ENCODE measurements at regions of chr2 and their contacts with region 1.

Region 1: DNA sequence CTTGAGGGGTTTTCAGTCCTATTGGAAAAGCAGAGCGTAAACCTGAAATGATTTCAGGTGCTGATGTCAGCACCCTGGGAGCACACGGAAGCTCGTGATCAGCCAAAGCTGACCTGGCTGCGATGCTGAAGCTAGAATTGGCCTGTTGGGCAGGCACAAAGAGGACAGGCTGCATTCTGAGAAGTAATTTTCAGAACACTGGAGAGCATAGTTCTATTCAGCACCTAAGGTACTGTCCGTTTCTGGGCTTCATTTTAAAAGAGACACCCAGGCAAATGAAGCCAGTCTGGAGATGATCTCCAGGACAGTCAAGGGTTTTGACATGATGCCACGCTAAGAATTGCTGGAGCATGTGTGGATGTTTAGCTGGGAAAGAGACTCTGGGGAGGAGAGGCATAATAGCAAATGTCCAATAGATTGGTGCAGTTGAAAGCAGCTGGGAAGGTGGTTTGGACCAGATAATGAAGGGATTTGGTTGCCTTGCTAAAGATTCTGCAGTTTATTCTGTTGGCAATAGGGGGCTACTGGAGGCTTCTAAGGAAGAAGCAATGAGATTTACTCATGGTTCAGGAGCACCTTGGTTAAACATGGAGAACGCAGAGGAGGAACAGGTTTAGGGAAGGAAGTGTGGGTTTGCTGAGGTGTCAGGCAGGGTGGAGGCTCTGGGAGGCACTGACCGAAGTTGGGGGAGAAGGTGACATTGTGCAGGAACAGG is 86.6 kb downstream of the ACOXL start:
- DNase-seq: no peak
- H3K4me3 ChIP-seq: no peak overlapping the region
- H3K27ac ChIP-seq: no peak overlapping the region
- H3K4me1 ChIP-seq: no peaks in the 10 kb centered on the region
- H3K27me3 ChIP-seq: no peaks in the 10 kb centered on the region
- CTCF ChIP-seq: no peak
- EP300 ChIP-seq: no peak
- POLR2A ChIP-seq: no peak

Region 2: GRCh38 chr2:110853507-110853906 is 34.6 kb after region 1 on chr2:
- intact Hi-C with region 1: no loop called
- DNase-seq: peak; percentile 45 to 52
- H3K4me3 ChIP-seq: no peak overlapping the region
- H3K27ac ChIP-seq: no peak overlapping the region
- H3K4me1 ChIP-seq: peaks cover 0 to 4% (median 0%) of the 10 kb centered on the region in 4 donors
- H3K27me3 ChIP-seq: no peaks in the 10 kb centered on the region
- CTCF ChIP-seq: peak in 3 of 7 experiments; percentile 16 to 33 (median 27)
- EP300 ChIP-seq: no peak
- POLR2A ChIP-seq: no peak

Region 3: DNA sequence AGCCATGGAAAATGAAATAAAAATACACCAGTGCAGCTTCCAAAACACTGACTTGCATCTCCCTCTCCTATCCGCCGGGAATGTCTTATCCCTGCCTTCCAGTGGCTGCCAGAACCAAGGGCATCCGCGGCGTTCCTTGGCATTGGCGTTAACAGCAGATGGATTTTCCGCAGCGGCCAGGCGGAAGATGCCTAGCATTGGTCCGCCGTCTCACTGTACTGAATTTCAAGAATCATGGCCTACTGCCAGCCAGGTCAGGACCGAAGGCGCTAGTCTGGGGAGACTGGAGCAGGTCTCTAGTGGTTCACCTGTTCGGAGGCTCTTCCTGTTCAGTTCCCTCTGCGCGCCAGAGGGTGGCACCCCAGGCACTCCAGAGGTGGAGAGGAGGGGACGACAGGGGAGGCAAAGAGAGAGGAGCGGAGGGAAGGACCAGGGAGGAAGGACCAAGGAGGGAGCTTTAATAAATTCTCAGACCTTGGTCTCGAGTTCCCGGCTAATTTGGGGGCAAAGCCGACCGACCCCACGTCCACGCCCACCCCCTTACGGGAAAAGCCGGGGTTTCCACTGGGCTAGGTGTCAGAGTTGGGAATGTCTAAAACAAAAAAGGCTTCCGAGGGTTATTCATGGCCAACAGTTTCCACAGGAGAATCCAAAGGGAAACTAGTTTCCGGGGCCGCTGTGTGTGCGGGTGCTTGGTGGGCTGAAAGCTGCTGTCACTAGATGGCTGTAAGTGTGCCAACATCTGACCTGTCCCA is 298.1 kb after region 1 on chr2:
- intact Hi-C with region 1: loop called (anchors 10 kb)
- DNase-seq: peak; percentile 82 to 93
- H3K4me3 ChIP-seq: peak overlapping the region; percentile 37 to 89 (median 78)
- H3K27ac ChIP-seq: peak overlapping the region in 1 of 5 donors; percentile 44
- H3K4me1 ChIP-seq: peaks cover 36 to 51% (median 46%) of the 10 kb centered on the region in 4 donors
- H3K27me3 ChIP-seq: peaks cover 5 to 79% (median 34%) of the 10 kb centered on the region in 3 donors
- CTCF ChIP-seq: peak in 5 of 7 experiments; percentile 75 to 90 (median 88)
- EP300 ChIP-seq: no peak
- POLR2A ChIP-seq: no peak